Ovary (tissue), 10 donors: ENCODE measurements at regions of chr12 and their contacts with region 1.

Region 1: GRCh38 chr12:8890313-8891085 is 23.8 kb upstream of the PHC1 start:
- DNase-seq: peak; percentile 43 to 64 (median 47)
- H3K4me3 ChIP-seq: peak overlapping the region; percentile 44
- H3K27ac ChIP-seq: no peak overlapping the region
- H3K4me1 ChIP-seq: no peaks in the 10 kb centered on the region
- H3K27me3 ChIP-seq: no peaks in the 10 kb centered on the region
- CTCF ChIP-seq: peak; percentile 76 to 89 (median 82)
- EP300 ChIP-seq: no peak
- POLR2A ChIP-seq: no peak

Region 2: GRCh38 chr12:8844665-8845064 is 45.8 kb before region 1 on chr12:
- intact Hi-C with region 1: no loop called
- DNase-seq: peak; percentile 89 to 94 (median 91)
- H3K4me3 ChIP-seq: no peak overlapping the region
- H3K27ac ChIP-seq: no peak overlapping the region
- H3K4me1 ChIP-seq: peaks cover 5% of the 10 kb centered on the region
- H3K27me3 ChIP-seq: no peaks in the 10 kb centered on the region
- CTCF ChIP-seq: no peak
- EP300 ChIP-seq: no peak
- POLR2A ChIP-seq: no peak

Region 3: GRCh38 chr12:10855807-10856206 is 1965.3 kb after region 1 on chr12:
- intact Hi-C with region 1: loop called in 1 of 4 experiments (anchors 5 kb)
- DNase-seq: no peak
- H3K4me3 ChIP-seq: no peak overlapping the region
- H3K27ac ChIP-seq: no peak overlapping the region
- H3K4me1 ChIP-seq: no peaks in the 10 kb centered on the region
- H3K27me3 ChIP-seq: no peaks in the 10 kb centered on the region
- CTCF ChIP-seq: no peak
- EP300 ChIP-seq: no peak
- POLR2A ChIP-seq: no peak